ENCODE measurements at regions of chr6 and their contacts with region 1.

Region 1: DNA sequence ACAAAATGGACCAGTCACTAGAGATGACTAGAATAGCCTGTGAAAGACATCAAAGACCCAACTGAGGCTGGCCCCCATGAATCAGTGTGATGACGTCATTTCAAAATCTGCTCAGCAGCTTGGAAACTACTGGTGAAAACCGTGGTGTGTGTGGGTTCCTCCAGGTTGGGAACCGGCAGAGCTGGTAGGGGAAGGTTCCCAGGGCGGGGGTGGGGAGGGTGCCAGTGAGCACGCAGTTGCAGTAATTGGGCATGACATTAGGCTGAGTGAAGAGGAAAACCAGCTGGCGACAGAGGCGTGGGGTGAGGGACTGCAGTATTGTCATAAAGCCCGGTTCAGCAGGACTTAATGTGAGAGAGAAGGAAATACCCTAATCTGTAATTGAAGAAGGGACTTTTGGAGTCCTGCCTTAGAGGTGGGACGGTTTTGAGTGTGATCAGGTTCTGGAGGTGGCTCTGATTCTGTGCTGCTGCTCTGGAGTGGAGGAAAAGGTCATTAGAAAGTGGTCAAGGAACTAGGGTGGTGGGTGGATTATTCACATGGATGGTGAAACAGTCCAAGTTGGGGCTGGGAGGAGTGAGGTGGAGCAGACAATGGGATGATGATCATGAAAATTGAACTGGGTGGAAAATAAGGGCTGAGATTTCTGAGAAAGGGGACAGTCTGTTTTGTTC is 52.0 kb upstream of the MTHFD1L start:
- DNase-seq: no peak
- H3K4me3 Mint-ChIP-seq: no peak overlapping the region
- H3K27ac Mint-ChIP-seq: peak overlapping the region; percentile 56
- H3K4me1 Mint-ChIP-seq: peaks cover 8% of the 10 kb centered on the region
- H3K27me3 Mint-ChIP-seq: peaks cover 8% of the 10 kb centered on the region

Region 2: DNA sequence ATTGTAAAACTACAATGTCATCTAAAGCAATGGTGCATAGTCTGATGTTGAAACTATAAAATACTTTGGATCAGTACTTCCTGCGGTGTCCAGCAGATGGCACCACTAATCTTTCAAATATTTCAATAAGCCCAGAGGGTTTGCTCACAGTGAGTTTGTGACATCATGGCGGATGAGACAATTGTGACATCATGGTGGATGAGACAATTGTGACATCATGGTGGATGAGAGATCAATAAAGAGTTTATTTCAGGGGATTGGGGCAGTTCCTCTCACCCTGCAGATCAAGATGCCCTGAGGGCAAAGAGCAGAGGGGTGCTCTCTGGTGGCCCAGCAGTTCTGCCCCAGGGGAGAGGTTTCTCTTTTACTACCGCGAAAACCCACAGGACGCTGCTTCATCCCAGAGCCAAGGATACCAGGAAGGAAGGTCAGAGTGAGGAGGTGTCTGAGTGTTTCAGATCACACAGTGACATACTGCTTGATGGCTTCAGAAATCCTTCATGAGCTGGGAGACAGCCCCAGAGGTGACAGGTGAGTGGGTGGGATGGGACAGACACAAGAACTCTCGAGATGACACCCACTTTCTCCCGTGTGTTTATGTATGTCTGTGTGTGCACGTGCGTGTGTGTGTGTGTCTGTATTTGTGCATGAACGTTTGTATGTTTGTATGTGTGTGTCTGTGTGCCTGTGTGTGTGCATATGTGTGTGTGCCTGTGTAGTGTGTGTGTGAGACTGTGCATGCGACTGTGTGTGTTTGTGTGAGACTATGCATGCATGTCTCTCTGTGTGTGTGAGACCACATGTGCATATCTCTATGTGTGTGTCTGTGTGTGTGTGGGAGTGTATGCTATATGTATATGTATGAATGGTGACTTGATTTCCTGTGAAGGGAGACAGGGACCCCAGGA is 879.0 kb before region 1 on chr6:
- intact Hi-C with region 1: loop called (anchors 10 kb)
- DNase-seq: peak; percentile 92
- H3K4me3 Mint-ChIP-seq: no peak overlapping the region
- H3K27ac Mint-ChIP-seq: no peak overlapping the region
- H3K4me1 Mint-ChIP-seq: peaks cover 25% of the 10 kb centered on the region
- H3K27me3 Mint-ChIP-seq: peaks cover 88% of the 10 kb centered on the region

Region 3: GRCh38 chr6:150079604-150080003 is 733.9 kb before region 1 on chr6:
- intact Hi-C with region 1: loop called (anchors 1 kb)
- DNase-seq: peak; percentile 74
- H3K4me3 Mint-ChIP-seq: peak overlapping the region; percentile 10
- H3K27ac Mint-ChIP-seq: no peak overlapping the region
- H3K4me1 Mint-ChIP-seq: peaks cover 13% of the 10 kb centered on the region
- H3K27me3 Mint-ChIP-seq: peaks cover 36% of the 10 kb centered on the region

Region 4: GRCh38 chr6:150417899-150418826 is 395.3 kb before region 1 on chr6:
- intact Hi-C with region 1: loop called (anchors 1 kb)
- DNase-seq: peak; percentile 77
- H3K4me3 Mint-ChIP-seq: peak overlapping the region; percentile 74
- H3K27ac Mint-ChIP-seq: peak overlapping the region; percentile 31
- H3K4me1 Mint-ChIP-seq: peaks cover 13% of the 10 kb centered on the region
- H3K27me3 Mint-ChIP-seq: peaks cover 31% of the 10 kb centered on the region

Region 5: GRCh38 chr6:150685860-150686259 is 127.6 kb before region 1 on chr6:
- intact Hi-C with region 1: loop called (anchors 10 kb)
- DNase-seq: peak; percentile 81
- H3K4me3 Mint-ChIP-seq: no peak overlapping the region
- H3K27ac Mint-ChIP-seq: no peak overlapping the region
- H3K4me1 Mint-ChIP-seq: peaks cover 2% of the 10 kb centered on the region
- H3K27me3 Mint-ChIP-seq: no peaks in the 10 kb centered on the region

Region 6: GRCh38 chr6:150865406-150866146 is 52.1 kb after region 1 on chr6 and contains the start of gene MTHFD1L:
- intact Hi-C with region 1: loop called (anchors 5 kb)
- DNase-seq: peak; percentile 94
- H3K4me3 Mint-ChIP-seq: peak within 1 kb of the TSS; percentile 98
- H3K27ac Mint-ChIP-seq: peak within 1 kb of the TSS; percentile 93
- H3K4me1 Mint-ChIP-seq: peaks cover 29% of the 10 kb centered on the region
- H3K27me3 Mint-ChIP-seq: peaks cover 10% of the 10 kb centered on the region
- total RNA-seq, gene MTHFD1L: 136 and 137 TPM in 2 replicates

Region 7: GRCh38 chr6:151323791-151324487 is 510.5 kb after region 1 on chr6:
- intact Hi-C with region 1: loop called (anchors 10 kb)
- DNase-seq: peak; percentile 92
- H3K4me3 Mint-ChIP-seq: peak overlapping the region; percentile 33
- H3K27ac Mint-ChIP-seq: no peak overlapping the region
- H3K4me1 Mint-ChIP-seq: peaks cover 17% of the 10 kb centered on the region
- H3K27me3 Mint-ChIP-seq: peaks cover 47% of the 10 kb centered on the region